Right cardiac atrium (tissue), 5 donors: ENCODE measurements at regions of chr13 and their contacts with region 1.

Region 1: DNA sequence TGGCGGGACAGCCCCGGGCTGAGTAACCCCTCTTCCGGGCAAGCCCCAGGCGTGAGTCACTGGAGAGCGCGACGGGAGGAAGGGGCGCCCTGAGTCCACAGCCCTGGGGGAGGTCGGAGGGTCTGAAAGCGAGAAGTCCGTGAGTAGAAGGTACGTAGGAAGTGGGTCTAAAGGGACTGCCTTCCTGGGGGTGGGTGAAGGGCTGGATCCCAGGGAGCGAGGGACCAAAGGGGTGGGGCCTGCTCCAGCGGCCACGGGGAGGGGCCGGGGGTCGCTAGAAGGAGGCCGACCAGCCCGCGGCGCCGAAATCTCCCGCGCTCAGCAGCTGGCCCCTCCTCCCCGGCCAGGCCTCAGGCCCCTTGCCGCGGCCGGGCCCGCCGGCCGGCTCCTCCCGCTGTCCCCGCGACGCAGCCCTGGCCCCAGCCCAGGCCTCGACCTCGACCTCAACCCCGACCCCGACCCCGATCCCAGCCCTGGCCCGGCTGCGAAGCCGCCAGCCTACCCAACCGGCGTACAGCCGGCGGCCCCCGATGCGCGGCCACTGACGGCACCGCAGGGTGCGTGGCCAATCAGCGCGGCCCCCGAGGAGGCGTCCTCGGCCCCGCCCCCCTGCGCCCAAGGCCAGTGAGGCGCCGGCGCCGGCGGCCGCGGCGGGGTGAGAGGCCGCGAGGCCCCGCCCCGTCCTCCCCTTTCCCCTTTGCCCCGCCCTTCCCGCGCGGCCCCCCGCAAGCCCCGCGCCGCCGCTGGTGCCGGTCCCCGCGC is 22.6 kb downstream of the IPO5 start:
- DNase-seq: peak; percentile 92 to 97 (median 96)
- ATAC-seq: peak; percentile 98 to 99
- H3K4me3 ChIP-seq: peak overlapping the region; percentile 93
- H3K27ac ChIP-seq: peak overlapping the region; percentile 90
- H3K4me1 ChIP-seq: no peaks in the 10 kb centered on the region
- H3K27me3 ChIP-seq: no peaks in the 10 kb centered on the region

Region 2: GRCh38 chr13:97834250-97834649 is 141.8 kb before region 1 on chr13:
- intact Hi-C with region 1: no loop called
- DNase-seq: no peak
- ATAC-seq: no peak
- H3K4me3 ChIP-seq: no peak overlapping the region
- H3K27ac ChIP-seq: no peak overlapping the region
- H3K4me1 ChIP-seq: no peaks in the 10 kb centered on the region
- H3K27me3 ChIP-seq: no peaks in the 10 kb centered on the region

Region 3: GRCh38 chr13:97855570-97856303 is 120.3 kb before region 1 on chr13:
- intact Hi-C with region 1: loop called (anchors 10 kb)
- DNase-seq: peak; percentile 59 to 73 (median 70)
- ATAC-seq: peak; percentile 87 to 88
- H3K4me3 ChIP-seq: no peak overlapping the region
- H3K27ac ChIP-seq: peak overlapping the region; percentile 30
- H3K4me1 ChIP-seq: peaks cover 2% of the 10 kb centered on the region
- H3K27me3 ChIP-seq: no peaks in the 10 kb centered on the region